OCI-LY7 (cell line): ENCODE measurements at regions of chr17 and their contacts with region 1.

Region 1: GRCh38 chr17:63773381-63774140 is at the start of gene CCDC47:
- DNase-seq: peak; percentile 99
- H3K4me3 ChIP-seq: peak within 1 kb of the TSS; percentile 90
- H3K27ac ChIP-seq: peak within 1 kb of the TSS; percentile 93
- H3K4me1 ChIP-seq: peaks cover 31% of the 10 kb centered on the region
- CTCF ChIP-seq: no peak
- total RNA-seq, gene CCDC47: 27.5 and 37.6 TPM in 2 replicates

Region 2: GRCh38 chr17:63587770-63588169 is 185.8 kb before region 1 on chr17:
- CTCF ChIA-PET with region 1: no interaction called
- POLR2A ChIA-PET with region 1: no interaction called
- intact Hi-C with region 1: no loop called
- DNase-seq: no peak
- H3K4me3 ChIP-seq: no peak overlapping the region
- H3K27ac ChIP-seq: no peak overlapping the region
- H3K4me1 ChIP-seq: no peaks in the 10 kb centered on the region
- CTCF ChIP-seq: no peak

Region 3: DNA sequence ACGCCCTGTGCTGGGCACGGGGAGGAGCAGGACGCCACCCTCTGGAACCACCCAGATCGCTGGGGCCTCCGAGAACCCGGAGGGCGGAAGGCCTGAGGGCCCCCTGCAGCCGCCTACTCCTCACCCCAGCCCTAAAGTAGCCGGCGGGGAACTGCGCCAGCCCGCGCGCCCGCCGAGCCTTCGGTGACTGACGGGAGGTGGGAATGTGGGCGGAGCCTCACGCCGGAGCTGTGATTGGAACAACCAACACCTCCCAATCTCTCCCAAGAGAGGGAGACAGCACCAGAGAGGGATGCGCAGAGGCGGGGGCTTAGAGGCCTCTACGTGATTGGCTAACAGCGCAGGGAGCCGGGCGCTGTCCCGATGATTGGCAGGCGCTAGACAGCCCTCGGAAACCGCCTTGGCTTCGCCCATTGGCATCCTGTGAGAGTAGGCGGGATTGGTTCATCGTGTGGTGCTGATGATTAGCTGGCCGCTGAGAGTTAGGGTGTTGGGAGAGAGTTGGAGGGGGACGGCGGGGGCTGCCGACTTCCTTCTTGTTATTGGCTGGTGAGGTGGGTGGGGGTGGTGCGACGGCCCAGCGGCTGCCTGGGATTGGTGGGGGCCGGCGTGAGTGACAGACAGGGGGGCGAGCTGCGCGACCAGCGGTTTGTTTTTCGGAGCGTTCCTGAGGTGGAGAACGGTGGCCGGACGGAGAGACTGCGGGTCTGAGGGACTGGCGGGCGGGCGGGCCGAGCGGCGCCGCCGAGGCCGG is 151.6 kb before region 1 on chr17 and contains the start of gene MAP3K3:
- CTCF ChIA-PET with region 1: no interaction called
- POLR2A ChIA-PET with region 1: no interaction called
- intact Hi-C with region 1: loop called (anchors 10 kb)
- DNase-seq: peak; percentile 100
- H3K4me3 ChIP-seq: peak within 1 kb of the TSS; percentile 75
- H3K27ac ChIP-seq: peak within 1 kb of the TSS; percentile 43
- H3K4me1 ChIP-seq: peaks cover 26% of the 10 kb centered on the region
- CTCF ChIP-seq: peak; percentile 52; the same call in 1 of the 2 replicates
- total RNA-seq, gene MAP3K3: 16.5 and 26.0 TPM in 2 replicates

Region 4: GRCh38 chr17:63809970-63810369 is 36.4 kb after region 1 on chr17:
- CTCF ChIA-PET with region 1: no interaction called
- POLR2A ChIA-PET with region 1: no interaction called
- intact Hi-C with region 1: no loop called
- DNase-seq: no peak
- H3K4me3 ChIP-seq: no peak overlapping the region
- H3K27ac ChIP-seq: no peak overlapping the region
- H3K4me1 ChIP-seq: no peaks in the 10 kb centered on the region
- CTCF ChIP-seq: no peak

Region 5: GRCh38 chr17:63827002-63827771 is 53.6 kb after region 1 on chr17 and contains the starts of genes FTSJ3 and PSMC5:
- CTCF ChIA-PET with region 1: no interaction called
- POLR2A ChIA-PET with region 1: interaction called, 3 read pairs
- intact Hi-C with region 1: loop called (anchors 1 kb)
- DNase-seq: peak; percentile 97
- H3K4me3 ChIP-seq: peak within 1 kb of the TSS; percentile 78
- H3K27ac ChIP-seq: peak within 1 kb of the TSS; percentile 67
- H3K4me1 ChIP-seq: peaks cover 23% of the 10 kb centered on the region
- CTCF ChIP-seq: peak; percentile 78
- total RNA-seq, gene FTSJ3: 32.4 and 43.0 TPM in 2 replicates
- total RNA-seq, gene PSMC5: 32.6 and 42.7 TPM in 2 replicates

Region 6: GRCh38 chr17:63842540-63843386 is 69.2 kb after region 1 on chr17 and contains the start of gene SMARCD2:
- CTCF ChIA-PET with region 1: no interaction called
- POLR2A ChIA-PET with region 1: interaction called, 4 read pairs
- intact Hi-C with region 1: loop called (anchors 1 kb)
- DNase-seq: peak; percentile 98
- H3K4me3 ChIP-seq: peak within 1 kb of the TSS; percentile 99
- H3K27ac ChIP-seq: peak within 1 kb of the TSS; percentile 97
- H3K4me1 ChIP-seq: peaks cover 48% of the 10 kb centered on the region
- CTCF ChIP-seq: no peak
- total RNA-seq, gene SMARCD2: 112 and 120 TPM in 2 replicates